ENCODE measurements at regions of chrX and their contacts with region 1.

Region 1: DNA sequence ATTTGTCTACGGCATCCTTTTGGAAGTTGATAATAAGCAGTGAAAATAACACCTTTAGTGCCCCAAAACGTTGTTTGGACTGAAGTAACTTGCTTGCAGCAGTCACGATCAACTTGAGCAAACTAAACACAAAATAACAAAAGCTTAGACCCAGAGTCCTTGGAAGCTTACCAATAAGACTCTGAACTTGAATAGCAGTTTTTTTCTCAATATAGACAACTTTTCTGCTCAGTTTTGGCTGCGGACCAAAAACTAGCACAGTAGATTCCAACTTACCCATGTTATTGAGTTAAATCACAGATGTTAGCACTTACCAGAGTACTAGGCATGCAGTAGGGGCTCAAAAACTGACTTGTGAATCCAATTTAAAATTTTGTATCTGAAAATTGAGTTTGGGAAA is 746.9 kb downstream of the PCDH19 start:
- DNase-seq: no peak
- ATAC-seq: no peak
- H3K4me3 ChIP-seq: no peak overlapping the region
- H3K27ac ChIP-seq: no peak overlapping the region
- H3K4me1 ChIP-seq: no peaks in the 10 kb centered on the region
- H3K27me3 ChIP-seq: no peaks in the 10 kb centered on the region
- CTCF ChIP-seq: no peak

Region 2: DNA sequence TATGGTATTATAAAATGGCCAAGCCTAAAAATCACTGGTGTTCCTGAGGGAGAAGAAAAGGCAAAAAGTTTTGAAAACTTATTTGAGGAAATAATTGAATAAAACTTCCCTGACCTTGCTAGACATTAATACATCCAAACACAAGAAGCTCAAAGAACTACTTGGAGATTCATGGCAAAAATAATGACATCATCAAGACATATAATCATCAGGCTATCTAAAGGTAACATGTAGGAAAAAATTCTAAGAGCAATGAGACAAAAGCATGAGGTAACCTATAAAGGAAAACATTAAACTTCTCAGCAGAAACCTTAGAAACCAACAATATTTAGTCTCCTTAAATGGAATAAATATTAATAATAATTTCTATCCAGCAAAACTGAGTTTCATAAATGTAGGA is 140.7 kb before region 1 on chrX:
- CTCF ChIA-PET with region 1: no interaction called
- POLR2A ChIA-PET with region 1: no interaction called
- in situ Hi-C with region 1: no loop called
- intact Hi-C with region 1: loop called (anchors 10 kb)
- DNase-seq: no peak
- ATAC-seq: no peak
- H3K4me3 ChIP-seq: no peak overlapping the region
- H3K27ac ChIP-seq: no peak overlapping the region
- H3K4me1 ChIP-seq: no peaks in the 10 kb centered on the region
- H3K27me3 ChIP-seq: no peaks in the 10 kb centered on the region
- CTCF ChIP-seq: no peak

Region 3: DNA sequence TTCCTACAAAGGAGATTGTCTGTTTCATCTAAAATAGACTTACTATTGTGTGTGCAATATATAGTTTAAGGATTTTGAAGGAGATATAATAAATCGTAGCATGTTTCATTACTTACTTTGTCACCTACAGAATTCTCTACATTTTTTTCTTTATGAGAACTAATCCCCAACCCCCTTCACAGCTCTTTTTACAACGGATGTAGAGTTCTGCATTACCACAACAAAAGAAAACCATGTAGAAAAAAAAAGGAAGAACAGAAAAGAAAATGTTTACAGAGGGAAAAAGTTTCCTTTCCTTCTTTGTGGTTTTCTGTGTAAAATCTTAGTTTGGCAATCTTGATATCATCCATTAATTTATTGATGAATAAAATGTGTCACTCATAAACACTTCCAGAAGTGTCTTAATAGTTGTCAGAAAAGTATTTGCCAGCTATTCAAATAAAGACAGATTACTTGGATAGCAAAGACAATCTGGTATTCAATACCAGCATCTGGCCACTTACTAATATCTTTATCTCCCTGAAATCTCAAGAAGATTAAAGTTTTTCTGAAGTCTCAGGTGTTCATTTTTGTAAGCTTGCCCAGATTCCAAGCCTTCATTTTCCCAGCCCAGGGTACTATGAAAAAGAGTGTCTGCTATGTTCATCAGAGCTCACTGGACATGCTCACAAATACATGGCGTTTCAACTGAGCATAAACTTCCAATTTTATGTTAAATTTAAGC is 59.9 kb before region 1 on chrX:
- CTCF ChIA-PET with region 1: no interaction called
- POLR2A ChIA-PET with region 1: no interaction called
- in situ Hi-C with region 1: no loop called
- intact Hi-C with region 1: no loop called
- DNase-seq: no peak
- ATAC-seq: no peak
- H3K4me3 ChIP-seq: no peak overlapping the region
- H3K27ac ChIP-seq: no peak overlapping the region
- H3K4me1 ChIP-seq: no peaks in the 10 kb centered on the region
- H3K27me3 ChIP-seq: no peaks in the 10 kb centered on the region
- CTCF ChIP-seq: no peak

Region 4: DNA sequence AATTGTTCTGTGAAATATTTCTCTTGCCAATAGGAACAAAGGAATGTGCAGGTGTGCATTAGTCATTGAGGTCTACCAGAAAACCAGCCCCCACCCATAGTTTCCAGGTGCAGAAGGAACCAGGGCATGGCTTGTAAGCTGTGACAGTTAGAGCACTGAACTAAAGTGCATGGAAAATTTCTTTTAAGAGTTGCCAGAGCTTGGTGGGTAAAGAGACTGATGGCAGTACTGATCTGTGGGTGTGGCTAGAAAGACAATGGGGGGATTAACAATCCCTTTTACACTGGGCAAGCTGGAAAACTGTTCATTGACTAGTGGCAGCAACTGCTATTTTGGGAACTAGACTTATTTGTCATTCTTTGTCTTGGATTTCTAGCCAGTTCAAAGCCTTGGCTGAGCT is 420.1 kb after region 1 on chrX:
- CTCF ChIA-PET with region 1: no interaction called
- POLR2A ChIA-PET with region 1: no interaction called
- in situ Hi-C with region 1: no loop called
- intact Hi-C with region 1: no loop called
- DNase-seq: no peak
- ATAC-seq: no peak
- H3K4me3 ChIP-seq: no peak overlapping the region
- H3K27ac ChIP-seq: no peak overlapping the region
- H3K4me1 ChIP-seq: no peaks in the 10 kb centered on the region
- H3K27me3 ChIP-seq: no peaks in the 10 kb centered on the region
- CTCF ChIP-seq: no peak

Measured in Panc1 (cell line).